Activated CD8-positive, alpha-beta T cell treated with anti-CD3 and anti-CD28 coated beads, Interleukin-2, amount 10 ng/mL, durations not matched to agents 7 days and 5 days (primary cell): ENCODE measurements at regions of chr19 and their contacts with region 1.

Region 1: GRCh38 chr19:7943444-7944176 is at the start of gene TIMM44:
- DNase-seq: peak; percentile 100
- ATAC-seq: peak; percentile 99
- H3K4me3 Mint-ChIP-seq: peak within 1 kb of the TSS; percentile 91
- H3K27ac Mint-ChIP-seq: peak within 1 kb of the TSS; percentile 97
- H3K4me1 Mint-ChIP-seq: peaks cover 39% of the 10 kb centered on the region
- H3K27me3 Mint-ChIP-seq: no peaks in the 10 kb centered on the region
- total RNA-seq, gene TIMM44: 63.6 to 69.6 TPM

Region 2: GRCh38 chr19:7903244-7904073 is 40.2 kb before region 1 on chr19 and contains the start of gene MAP2K7:
- CTCF ChIA-PET with region 1: interaction called, 12 read pairs
- POLR2A ChIA-PET with region 1: interaction called, 5 read pairs
- DNase-seq: peak; percentile 100
- ATAC-seq: peak; percentile 86
- H3K4me3 Mint-ChIP-seq: peak within 1 kb of the TSS; percentile 85
- H3K27ac Mint-ChIP-seq: peak within 1 kb of the TSS; percentile 95
- H3K4me1 Mint-ChIP-seq: peaks cover 26% of the 10 kb centered on the region
- H3K27me3 Mint-ChIP-seq: no peaks in the 10 kb centered on the region
- total RNA-seq, gene MAP2K7: 36.5 to 39.9 TPM

Region 3: GRCh38 chr19:7928736-7929701 is 14.6 kb before region 1 on chr19:
- CTCF ChIA-PET with region 1: interaction called, 50 read pairs
- POLR2A ChIA-PET with region 1: interaction called, 5 read pairs
- DNase-seq: peak; percentile 71
- ATAC-seq: peak; percentile 38
- H3K4me3 Mint-ChIP-seq: no peak overlapping the region
- H3K27ac Mint-ChIP-seq: no peak overlapping the region
- H3K4me1 Mint-ChIP-seq: peaks cover 14% of the 10 kb centered on the region
- H3K27me3 Mint-ChIP-seq: no peaks in the 10 kb centered on the region

Region 4: GRCh38 chr19:7970716-7971448 is 27.3 kb after region 1 on chr19:
- CTCF ChIA-PET with region 1: interaction called, 16 read pairs
- POLR2A ChIA-PET with region 1: interaction called, 3 read pairs
- DNase-seq: peak; percentile 38
- ATAC-seq: no peak
- H3K4me3 Mint-ChIP-seq: no peak overlapping the region
- H3K27ac Mint-ChIP-seq: peak overlapping the region; percentile 39
- H3K4me1 Mint-ChIP-seq: peaks cover 5% of the 10 kb centered on the region
- H3K27me3 Mint-ChIP-seq: no peaks in the 10 kb centered on the region

Region 5: GRCh38 chr19:8005534-8006256 is 62.1 kb after region 1 on chr19 and contains the start of gene ELAVL1:
- CTCF ChIA-PET with region 1: interaction called, 35 read pairs
- POLR2A ChIA-PET with region 1: interaction called, 5 read pairs
- DNase-seq: peak; percentile 90
- ATAC-seq: peak; percentile 93
- H3K4me3 Mint-ChIP-seq: peak within 1 kb of the TSS; percentile 84
- H3K27ac Mint-ChIP-seq: peak within 1 kb of the TSS; percentile 86
- H3K4me1 Mint-ChIP-seq: peaks cover 35% of the 10 kb centered on the region
- H3K27me3 Mint-ChIP-seq: no peaks in the 10 kb centered on the region
- total RNA-seq, gene ELAVL1: 128 to 132 TPM